Activated B cell treated with CpG ODN at 0.5 μM for 24 hours (primary cell): ENCODE measurements at regions of chr7 and their contacts with region 1.

Region 1: GRCh38 chr7:25093268-25093826 is 31.7 kb downstream of the CYCS start:
- DNase-seq: peak; percentile 71
- ATAC-seq: peak; percentile 89
- H3K4me3 Mint-ChIP-seq: no peak overlapping the region
- H3K27ac Mint-ChIP-seq: no peak overlapping the region
- H3K4me1 Mint-ChIP-seq: peaks cover 8% of the 10 kb centered on the region
- H3K27me3 Mint-ChIP-seq: peaks cover 3% of the 10 kb centered on the region
- CTCF ChIP-seq: no peak

Region 2: DNA sequence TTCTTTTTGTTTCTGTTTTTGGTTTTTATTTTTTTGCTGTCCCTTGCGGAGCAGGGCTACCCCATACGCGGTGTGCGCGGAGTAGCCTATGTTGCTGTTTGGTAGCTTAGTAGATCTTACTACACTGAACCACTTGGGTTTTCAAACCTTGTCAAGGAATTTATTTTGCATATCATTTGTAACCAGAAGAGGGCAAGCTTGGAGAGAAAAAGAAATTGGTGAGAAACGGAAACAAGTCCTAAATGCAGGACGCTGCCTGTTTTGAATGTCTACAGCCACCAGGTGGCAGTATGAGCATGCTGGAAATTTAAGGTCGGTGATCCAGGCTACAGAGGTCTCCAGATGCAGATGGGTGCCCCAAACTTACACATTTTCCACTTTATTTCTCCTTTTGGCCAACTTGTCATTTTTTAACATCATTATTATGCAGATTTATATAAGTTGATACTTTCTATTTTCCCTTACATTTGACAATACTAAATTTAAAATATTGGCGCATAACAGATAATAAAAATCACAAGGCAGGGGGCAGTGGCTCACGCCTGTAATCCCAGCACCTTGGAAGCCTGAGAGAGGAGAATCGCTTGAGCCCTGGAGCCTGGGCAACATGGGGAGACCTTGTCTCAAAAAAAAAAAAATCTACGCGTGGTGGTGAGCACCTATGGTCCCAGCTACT is 1546.3 kb before region 1 on chr7:
- CTCF ChIA-PET with region 1: interaction called, 3 read pairs
- POLR2A ChIA-PET with region 1: no interaction called
- intact Hi-C with region 1: loop called (anchors 5 kb)
- DNase-seq: peak; percentile 40
- ATAC-seq: peak; percentile 91
- H3K4me3 Mint-ChIP-seq: no peak overlapping the region
- H3K27ac Mint-ChIP-seq: no peak overlapping the region
- H3K4me1 Mint-ChIP-seq: peaks cover 18% of the 10 kb centered on the region
- H3K27me3 Mint-ChIP-seq: no peaks in the 10 kb centered on the region
- CTCF ChIP-seq: no peak

Region 3: DNA sequence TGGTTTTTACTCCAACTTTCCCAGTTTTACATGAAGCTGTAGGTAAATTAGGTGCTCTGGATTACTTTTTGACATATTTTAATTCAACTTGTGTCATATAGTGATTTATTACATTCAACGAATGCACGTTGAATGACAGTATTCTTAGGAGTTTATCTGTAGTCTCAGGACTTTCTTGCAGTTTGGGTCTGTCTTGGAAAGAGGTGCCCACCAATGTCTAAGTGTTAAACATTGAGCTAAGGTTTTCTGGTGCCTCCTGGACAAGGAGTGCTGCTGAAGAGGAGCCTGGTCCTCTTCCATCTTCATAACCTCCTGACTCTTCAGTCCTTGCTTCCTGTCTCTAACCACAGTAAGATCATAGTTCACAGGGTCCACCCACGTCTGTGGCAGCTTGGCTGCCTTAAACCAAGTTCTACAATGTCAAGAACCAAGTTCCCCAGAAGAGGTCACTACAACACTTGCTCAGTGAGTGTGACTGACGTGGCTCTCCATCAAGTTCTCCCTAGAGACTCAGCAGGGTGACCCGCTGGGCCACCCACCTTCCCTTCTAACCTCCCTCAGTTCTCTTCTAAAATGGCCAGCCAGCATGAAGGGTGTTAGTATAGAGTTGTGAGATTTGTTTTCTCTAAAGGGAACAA is 803.2 kb before region 1 on chr7:
- CTCF ChIA-PET with region 1: no interaction called
- POLR2A ChIA-PET with region 1: no interaction called
- intact Hi-C with region 1: loop called (anchors 5 kb)
- DNase-seq: no peak
- ATAC-seq: peak; percentile 90
- H3K4me3 Mint-ChIP-seq: no peak overlapping the region
- H3K27ac Mint-ChIP-seq: no peak overlapping the region
- H3K4me1 Mint-ChIP-seq: peaks cover 13% of the 10 kb centered on the region
- H3K27me3 Mint-ChIP-seq: peaks cover 34% of the 10 kb centered on the region
- CTCF ChIP-seq: no peak

Region 4: GRCh38 chr7:24715661-24716479 is 377.5 kb before region 1 on chr7:
- CTCF ChIA-PET with region 1: interaction called, 10 read pairs
- POLR2A ChIA-PET with region 1: no interaction called
- intact Hi-C with region 1: loop called (anchors 10 kb)
- DNase-seq: no peak
- ATAC-seq: no peak
- H3K4me3 Mint-ChIP-seq: peak overlapping the region; percentile 64
- H3K27ac Mint-ChIP-seq: peak overlapping the region; percentile 61
- H3K4me1 Mint-ChIP-seq: peaks cover 65% of the 10 kb centered on the region
- H3K27me3 Mint-ChIP-seq: no peaks in the 10 kb centered on the region
- CTCF ChIP-seq: no peak

Region 5: DNA sequence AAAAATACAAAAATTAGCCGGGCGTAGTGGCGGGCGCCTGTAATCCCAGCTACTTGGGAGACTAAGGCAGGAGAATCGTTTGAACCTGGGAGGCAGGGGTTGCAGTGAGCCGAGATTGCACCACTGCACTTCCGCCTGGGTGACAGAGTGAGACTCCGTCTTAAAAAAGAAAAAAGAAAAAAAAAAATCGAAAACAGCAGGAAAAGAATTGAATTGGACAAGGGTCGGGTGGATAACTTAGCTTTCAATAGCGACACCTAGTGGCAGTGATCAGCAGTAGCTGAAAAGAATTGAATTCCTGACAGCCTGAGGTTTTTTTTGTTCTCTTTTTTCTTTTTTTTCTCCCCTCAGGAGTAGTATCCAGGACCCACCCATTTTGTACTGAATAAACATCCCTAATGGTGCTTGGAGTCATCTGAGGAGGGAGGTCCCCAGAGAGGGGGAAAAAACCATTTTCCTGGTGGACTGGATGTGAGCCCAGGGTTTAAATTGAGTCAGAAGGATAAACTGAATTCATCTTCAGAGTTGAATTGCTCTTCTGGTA is 23.4 kb before region 1 on chr7:
- CTCF ChIA-PET with region 1: interaction called, 24 read pairs
- POLR2A ChIA-PET with region 1: no interaction called
- intact Hi-C with region 1: loop called (anchors 1 kb)
- DNase-seq: no peak
- ATAC-seq: peak; percentile 49
- H3K4me3 Mint-ChIP-seq: no peak overlapping the region
- H3K27ac Mint-ChIP-seq: no peak overlapping the region
- H3K4me1 Mint-ChIP-seq: peaks cover 7% of the 10 kb centered on the region
- H3K27me3 Mint-ChIP-seq: no peaks in the 10 kb centered on the region
- CTCF ChIP-seq: peak; percentile 55

Region 6: DNA sequence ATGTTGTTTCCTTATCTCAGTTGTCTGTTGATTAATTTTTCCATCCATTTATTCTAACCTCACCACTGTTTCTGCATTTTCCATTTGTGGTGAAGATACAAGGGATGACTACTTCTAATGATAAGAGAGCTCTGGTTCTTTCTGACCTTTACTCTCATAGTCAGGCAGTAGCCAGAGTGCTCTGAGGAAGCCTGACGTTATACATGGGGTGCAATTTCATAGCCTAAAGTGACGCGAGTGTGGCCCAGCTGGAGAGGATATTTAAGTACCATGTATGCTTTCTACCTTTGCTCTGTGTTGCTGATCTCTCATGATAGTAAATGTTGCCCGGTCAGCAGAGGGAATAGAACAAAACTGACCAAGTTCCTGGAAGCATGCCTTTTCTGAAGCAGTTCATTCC is 65.6 kb after region 1 on chr7:
- CTCF ChIA-PET with region 1: interaction called, 4 read pairs
- POLR2A ChIA-PET with region 1: no interaction called
- intact Hi-C with region 1: loop called (anchors 1 kb)
- DNase-seq: no peak
- ATAC-seq: no peak
- H3K4me3 Mint-ChIP-seq: no peak overlapping the region
- H3K27ac Mint-ChIP-seq: no peak overlapping the region
- H3K4me1 Mint-ChIP-seq: peaks cover 1% of the 10 kb centered on the region
- H3K27me3 Mint-ChIP-seq: no peaks in the 10 kb centered on the region
- CTCF ChIP-seq: no peak